Psoas muscle (tissue), 8 donors: ENCODE measurements at regions of chr17 and their contacts with region 1.

Region 1: GRCh38 chr17:72725433-72726068 is 366.9 kb downstream of the SLC39A11 start:
- DNase-seq: peak; percentile 35 to 62
- ATAC-seq: peak; percentile 64 to 77 (median 68)
- H3K4me3 ChIP-seq: no peak overlapping the region
- H3K27ac ChIP-seq: no peak overlapping the region
- H3K4me1 ChIP-seq: no peaks in the 10 kb centered on the region
- H3K27me3 ChIP-seq: no peaks in the 10 kb centered on the region
- CTCF ChIP-seq: peak; percentile 69

Region 2: GRCh38 chr17:72985881-72986720 is 260.6 kb after region 1 on chr17:
- intact Hi-C with region 1: loop called in 1 of 2 experiments (anchors 5 kb)
- DNase-seq: peak; percentile 36 to 56
- ATAC-seq: peak; percentile 68 to 89 (median 80)
- H3K4me3 ChIP-seq: no peak overlapping the region
- H3K27ac ChIP-seq: no peak overlapping the region
- H3K4me1 ChIP-seq: no peaks in the 10 kb centered on the region
- H3K27me3 ChIP-seq: no peaks in the 10 kb centered on the region
- CTCF ChIP-seq: peak; percentile 83

Region 3: GRCh38 chr17:73156166-73156840 is 430.8 kb after region 1 on chr17:
- intact Hi-C with region 1: loop called (anchors 2 to 5 kb)
- DNase-seq: peak; percentile 68 to 71
- ATAC-seq: peak; percentile 73 to 85 (median 80)
- H3K4me3 ChIP-seq: no peak overlapping the region
- H3K27ac ChIP-seq: no peak overlapping the region
- H3K4me1 ChIP-seq: no peaks in the 10 kb centered on the region
- H3K27me3 ChIP-seq: peaks cover 0 to 7% (median under 1%) of the 10 kb centered on the region in 3 donors
- CTCF ChIP-seq: peak; percentile 73

Region 4: DNA sequence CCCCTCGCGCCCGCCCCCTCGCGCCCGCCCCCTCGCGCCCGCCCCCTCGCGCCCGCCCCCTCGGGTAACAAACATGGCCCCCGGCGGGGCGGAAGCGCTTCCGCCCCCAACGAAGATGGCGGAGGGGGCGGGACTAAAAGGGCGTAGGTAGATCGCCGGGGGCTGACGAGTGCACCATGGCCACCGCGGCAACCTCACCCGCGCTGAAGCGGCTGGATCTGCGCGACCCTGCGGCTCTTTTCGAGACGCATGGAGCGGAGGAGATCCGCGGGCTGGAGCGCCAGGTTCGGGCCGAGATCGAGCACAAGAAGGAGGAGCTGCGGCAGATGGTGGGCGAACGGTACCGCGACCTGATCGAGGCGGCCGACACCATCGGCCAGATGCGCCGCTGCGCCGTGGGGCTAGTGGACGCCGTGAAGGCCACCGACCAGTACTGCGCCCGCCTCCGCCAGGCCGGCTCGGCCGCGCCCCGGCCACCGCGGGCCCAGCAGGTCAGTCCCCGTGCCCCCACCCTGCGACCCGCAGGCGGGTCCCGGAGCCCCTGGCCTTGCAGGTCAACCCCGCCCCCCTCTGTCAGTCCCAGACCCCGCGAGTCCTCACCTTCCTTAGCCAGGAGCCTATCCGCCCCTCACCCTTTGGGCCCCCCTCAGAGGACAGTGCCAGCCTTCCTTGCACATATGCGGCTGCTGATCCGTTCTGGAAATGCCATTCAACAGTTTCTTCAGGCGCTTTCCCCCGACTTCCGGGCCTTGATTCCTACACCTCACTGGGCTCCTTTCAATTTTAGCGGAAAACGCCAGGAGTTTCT is 467.5 kb after region 1 on chr17 and contains the start of gene COG1:
- intact Hi-C with region 1: loop called (anchors 2 to 10 kb)
- DNase-seq: peak; percentile 90 to 95
- ATAC-seq: peak; percentile 87 to 90 (median 90)
- H3K4me3 ChIP-seq: peak within 1 kb of the TSS; percentile 99
- H3K27ac ChIP-seq: peak within 1 kb of the TSS; percentile 97
- H3K4me1 ChIP-seq: peaks cover 23% of the 10 kb centered on the region
- H3K27me3 ChIP-seq: no peaks in the 10 kb centered on the region
- CTCF ChIP-seq: no peak
- total RNA-seq, gene COG1: 38.8 to 61.9 (median 51.7) TPM

Region 5: DNA sequence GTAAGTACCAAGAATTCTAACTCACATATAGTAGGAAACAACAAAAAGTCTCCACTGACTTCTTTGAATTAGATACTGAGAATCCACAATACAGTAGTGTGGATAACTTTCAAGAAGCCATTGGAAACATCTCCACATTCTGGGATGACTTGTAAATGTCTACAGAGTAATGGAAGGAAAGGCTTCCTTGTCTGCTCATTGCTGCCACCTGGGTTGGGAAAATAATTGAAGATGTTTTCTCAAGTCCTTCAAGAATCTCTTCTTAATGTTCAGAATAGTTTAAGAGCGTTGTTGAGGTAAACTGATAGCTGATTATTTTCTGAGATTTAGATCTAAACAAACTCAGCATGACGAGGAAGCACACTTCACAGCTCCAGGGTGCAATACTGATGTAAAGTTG is 522.2 kb after region 1 on chr17:
- intact Hi-C with region 1: loop called (anchors 5 to 10 kb)
- DNase-seq: no peak
- ATAC-seq: no peak
- H3K4me3 ChIP-seq: no peak overlapping the region
- H3K27ac ChIP-seq: no peak overlapping the region
- H3K4me1 ChIP-seq: no peaks in the 10 kb centered on the region
- H3K27me3 ChIP-seq: no peaks in the 10 kb centered on the region
- CTCF ChIP-seq: peak; percentile 11

Region 6: DNA sequence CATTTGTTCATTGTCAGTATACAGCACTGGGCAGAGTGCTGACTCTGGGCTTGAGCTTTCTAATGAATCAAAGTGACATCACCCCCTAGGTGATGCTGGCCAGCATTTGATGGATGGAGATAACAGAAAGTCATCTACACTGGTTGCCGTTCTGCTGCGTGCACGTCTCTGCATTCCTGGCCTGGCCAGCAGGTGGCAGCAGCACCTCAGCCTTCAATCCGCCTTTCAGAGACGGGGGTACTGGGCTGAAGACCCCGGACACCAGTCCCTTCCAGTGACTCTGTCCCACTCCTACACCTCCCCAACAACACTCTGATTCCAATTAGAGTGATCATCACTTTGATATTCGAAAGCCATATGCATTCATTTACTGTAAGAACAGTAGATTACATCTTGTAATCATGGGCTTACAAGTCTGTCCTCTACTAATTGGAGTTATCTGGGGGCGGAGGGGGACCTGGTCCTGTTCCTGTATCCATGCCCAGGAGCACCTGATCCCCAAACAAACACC is 530.2 kb after region 1 on chr17:
- intact Hi-C with region 1: loop called in 1 of 2 experiments (anchors 10 kb)
- DNase-seq: peak; percentile 45 to 72
- ATAC-seq: peak; percentile 66 to 88 (median 80)
- H3K4me3 ChIP-seq: no peak overlapping the region
- H3K27ac ChIP-seq: no peak overlapping the region
- H3K4me1 ChIP-seq: no peaks in the 10 kb centered on the region
- H3K27me3 ChIP-seq: no peaks in the 10 kb centered on the region
- CTCF ChIP-seq: peak; percentile 99

Region 7: DNA sequence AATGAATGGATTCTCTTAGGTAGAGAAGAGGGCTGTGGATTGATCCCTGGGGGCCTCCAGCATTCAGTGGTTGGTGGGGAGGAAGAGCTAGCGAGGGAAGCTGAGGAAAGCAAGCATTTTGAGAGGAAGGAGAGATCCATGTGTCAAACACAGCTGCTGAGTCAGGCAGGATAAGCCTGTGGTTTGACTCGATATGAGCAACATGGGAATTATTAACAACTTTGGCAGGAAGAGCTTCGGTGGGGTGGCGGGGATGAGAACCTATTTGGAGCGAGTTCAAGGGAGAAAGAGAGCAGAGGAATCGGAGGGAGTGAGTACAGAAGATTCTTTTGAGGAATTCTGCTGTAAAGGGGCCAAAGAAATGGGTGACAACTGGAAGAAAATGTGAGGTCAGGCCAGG is 645.7 kb after region 1 on chr17:
- intact Hi-C with region 1: loop called (anchors 5 kb)
- DNase-seq: no peak
- ATAC-seq: no peak
- H3K4me3 ChIP-seq: no peak overlapping the region
- H3K27ac ChIP-seq: no peak overlapping the region
- H3K4me1 ChIP-seq: no peaks in the 10 kb centered on the region
- H3K27me3 ChIP-seq: peaks cover 0 to 6% (median 0%) of the 10 kb centered on the region in 3 donors
- CTCF ChIP-seq: no peak